ENCODE measurements at regions of chr9 and their contacts with region 1.

Region 1: GRCh38 chr9:69421908-69422801 is 97.1 kb downstream of the ENTREP1 start:
- DNase-seq: peak; percentile 62
- H3K4me3 ChIP-seq: no peak overlapping the region
- H3K27ac ChIP-seq: no peak overlapping the region
- H3K4me1 ChIP-seq: no peaks in the 10 kb centered on the region
- H3K27me3 ChIP-seq: no peaks in the 10 kb centered on the region
- CTCF ChIP-seq: peak; percentile 78

Region 2: GRCh38 chr9:68560071-68560844 is 861.9 kb before region 1 on chr9:
- intact Hi-C with region 1: no loop called
- DNase-seq: peak; percentile 74
- H3K4me3 ChIP-seq: no peak overlapping the region
- H3K27ac ChIP-seq: no peak overlapping the region
- H3K4me1 ChIP-seq: no peaks in the 10 kb centered on the region
- H3K27me3 ChIP-seq: no peaks in the 10 kb centered on the region
- CTCF ChIP-seq: peak; percentile 36

Region 3: DNA sequence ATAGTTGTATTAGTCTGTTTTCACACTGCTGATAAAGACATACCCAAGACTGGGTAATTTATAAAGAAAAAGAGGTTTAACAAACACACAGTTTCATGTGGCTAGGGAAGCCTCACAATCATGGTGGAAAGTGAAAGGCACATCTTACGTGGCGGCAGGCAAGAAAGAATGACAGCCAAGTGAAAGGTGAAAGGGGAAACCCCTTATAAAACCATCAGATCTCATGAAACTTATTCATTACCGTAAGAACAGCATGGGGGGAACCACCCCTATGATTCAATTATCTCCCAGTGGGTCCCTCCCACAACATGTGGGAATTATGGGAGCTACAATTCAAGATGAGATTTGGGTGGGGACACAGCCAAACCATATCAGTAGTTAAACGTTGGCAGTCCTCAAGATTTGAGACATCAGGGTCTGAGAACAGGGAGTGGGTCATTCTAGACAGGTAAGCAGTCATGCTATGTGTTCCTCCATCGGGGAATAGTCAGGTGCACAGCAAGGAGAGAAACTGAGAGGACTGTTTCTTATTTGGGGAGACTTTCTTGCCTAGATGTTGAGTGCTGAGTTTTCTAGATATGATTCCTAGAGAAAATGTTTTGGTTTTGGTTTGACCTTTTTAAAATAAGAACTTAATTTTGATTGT is 142.9 kb before region 1 on chr9:
- intact Hi-C with region 1: no loop called
- DNase-seq: no peak
- H3K4me3 ChIP-seq: no peak overlapping the region
- H3K27ac ChIP-seq: no peak overlapping the region
- H3K4me1 ChIP-seq: no peaks in the 10 kb centered on the region
- H3K27me3 ChIP-seq: no peaks in the 10 kb centered on the region
- CTCF ChIP-seq: no peak

Region 4: DNA sequence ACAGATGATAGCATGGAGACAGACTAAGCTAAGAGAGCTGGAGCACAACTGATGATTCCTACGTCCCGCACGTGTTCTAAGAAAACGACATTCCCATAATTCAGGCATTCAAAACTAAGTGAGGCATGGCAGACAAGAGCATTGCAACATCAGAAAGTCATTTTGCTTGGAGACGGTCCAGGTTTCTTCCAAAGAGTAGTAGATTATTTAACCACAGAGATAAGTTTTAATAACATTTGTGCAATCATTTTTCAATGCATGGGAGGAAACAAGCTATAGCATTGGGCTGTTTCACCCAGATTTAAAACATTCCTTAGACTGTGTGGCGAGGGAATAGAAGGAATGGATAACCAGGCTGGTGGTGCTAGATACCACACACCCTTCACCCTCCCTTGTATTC is 132.8 kb after region 1 on chr9:
- intact Hi-C with region 1: no loop called
- DNase-seq: no peak
- H3K4me3 ChIP-seq: no peak overlapping the region
- H3K27ac ChIP-seq: no peak overlapping the region
- H3K4me1 ChIP-seq: no peaks in the 10 kb centered on the region
- H3K27me3 ChIP-seq: no peaks in the 10 kb centered on the region
- CTCF ChIP-seq: no peak

Region 5: GRCh38 chr9:69877854-69878514 is 455.8 kb after region 1 on chr9:
- intact Hi-C with region 1: loop called (anchors 2 kb)
- DNase-seq: no peak
- H3K4me3 ChIP-seq: no peak overlapping the region
- H3K27ac ChIP-seq: no peak overlapping the region
- H3K4me1 ChIP-seq: no peaks in the 10 kb centered on the region
- H3K27me3 ChIP-seq: no peaks in the 10 kb centered on the region
- CTCF ChIP-seq: peak; percentile 44

Region 6: GRCh38 chr9:69919461-69920061 is 497.4 kb after region 1 on chr9:
- intact Hi-C with region 1: loop called (anchors 5 kb)
- DNase-seq: no peak
- H3K4me3 ChIP-seq: no peak overlapping the region
- H3K27ac ChIP-seq: no peak overlapping the region
- H3K4me1 ChIP-seq: no peaks in the 10 kb centered on the region
- H3K27me3 ChIP-seq: no peaks in the 10 kb centered on the region
- CTCF ChIP-seq: peak; percentile 73

Measured in colonic mucosa (tissue), 4 donors.